ENCODE measurements at regions of chr11 and their contacts with region 1.

Region 1: GRCh38 chr11:42161886-42162285 is 702.4 kb upstream of the LRRC4C start:
- DNase-seq: no peak
- H3K4me3 ChIP-seq: no peak overlapping the region
- H3K27ac ChIP-seq: no peak overlapping the region
- H3K4me1 ChIP-seq: no peaks in the 10 kb centered on the region
- H3K27me3 ChIP-seq: no peaks in the 10 kb centered on the region
- CTCF ChIP-seq: no peak

Region 2: GRCh38 chr11:40647290-40647689 is 1514.6 kb before region 1 on chr11:
- CTCF ChIA-PET with region 1: no interaction called
- POLR2A ChIA-PET with region 1: interaction called, 16 read pairs
- intact Hi-C with region 1: no loop called
- DNase-seq: no peak
- H3K4me3 ChIP-seq: no peak overlapping the region
- H3K27ac ChIP-seq: no peak overlapping the region
- H3K4me1 ChIP-seq: no peaks in the 10 kb centered on the region
- H3K27me3 ChIP-seq: no peaks in the 10 kb centered on the region
- CTCF ChIP-seq: no peak

Region 3: GRCh38 chr11:42025121-42025803 is 136.6 kb before region 1 on chr11:
- CTCF ChIA-PET with region 1: no interaction called
- POLR2A ChIA-PET with region 1: no interaction called
- intact Hi-C with region 1: no loop called
- DNase-seq: no peak
- H3K4me3 ChIP-seq: no peak overlapping the region
- H3K27ac ChIP-seq: no peak overlapping the region
- H3K4me1 ChIP-seq: no peaks in the 10 kb centered on the region
- H3K27me3 ChIP-seq: no peaks in the 10 kb centered on the region
- CTCF ChIP-seq: no peak

Region 4: GRCh38 chr11:42273977-42274376 is 112.1 kb after region 1 on chr11:
- CTCF ChIA-PET with region 1: no interaction called
- POLR2A ChIA-PET with region 1: no interaction called
- intact Hi-C with region 1: no loop called
- DNase-seq: no peak
- H3K4me3 ChIP-seq: no peak overlapping the region
- H3K27ac ChIP-seq: no peak overlapping the region
- H3K4me1 ChIP-seq: no peaks in the 10 kb centered on the region
- H3K27me3 ChIP-seq: no peaks in the 10 kb centered on the region
- CTCF ChIP-seq: no peak